ENCODE measurements at regions of chr16 and their contacts with region 1.

Region 1: GRCh38 chr16:67191995-67192681 is at the start of gene E2F4:
- DNase-seq: peak; percentile 88 to 98 (median 94)

Region 2: DNA sequence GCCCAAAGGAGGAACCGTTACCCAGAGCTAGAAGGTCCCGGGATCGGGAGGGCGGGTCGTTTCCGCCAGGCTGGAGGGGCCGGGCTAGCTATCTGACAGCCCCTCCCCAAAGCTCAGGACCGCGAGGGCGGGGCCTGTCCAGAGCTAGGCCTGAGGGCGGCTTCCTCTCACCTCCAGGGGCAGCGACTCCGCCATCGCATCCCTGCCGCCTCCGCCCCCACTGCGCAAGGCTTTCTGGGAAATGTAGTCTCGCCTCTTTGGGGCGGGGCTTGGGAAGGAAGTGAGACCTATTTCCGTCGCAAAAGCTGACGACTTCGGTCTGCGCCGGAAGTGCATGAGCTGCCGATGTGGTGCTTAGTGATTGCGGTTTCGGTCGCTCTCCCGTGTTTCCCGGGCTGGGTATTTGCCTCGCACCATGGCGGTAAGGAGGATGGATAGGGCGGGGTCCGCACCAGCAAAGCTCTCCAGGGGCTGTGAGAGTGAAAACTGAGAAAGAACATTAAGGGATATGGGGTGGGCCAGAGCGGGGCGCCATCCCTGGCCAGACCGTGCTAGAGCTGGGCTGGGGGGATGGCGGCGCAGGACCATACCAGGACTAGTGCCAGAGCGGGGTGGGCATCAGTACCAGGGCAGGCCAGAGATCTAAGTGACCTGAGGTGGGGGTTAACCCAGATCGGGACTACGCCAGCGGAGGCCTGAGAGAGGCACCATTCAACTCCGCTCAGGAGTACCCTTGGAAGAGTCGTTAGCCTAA is 34.8 kb after region 1 on chr16 and contains the start of gene TMEM208:
- intact Hi-C with region 1: loop called (anchors 5 kb)
- DNase-seq: peak; percentile 92 to 99 (median 96)

Measured in head of caudate nucleus (tissue), 42 donors.